ENCODE measurements at regions of chr2 and their contacts with region 1.

Region 1: GRCh38 chr2:37832590-37833197 is 92.4 kb upstream of the RMDN2 start:
- DNase-seq: peak; percentile 88
- ATAC-seq: peak; percentile 89 to 94
- H3K4me3 ChIP-seq: no peak overlapping the region
- H3K27ac ChIP-seq: no peak overlapping the region
- H3K4me1 ChIP-seq: peaks cover 31% of the 10 kb centered on the region
- H3K27me3 ChIP-seq: no peaks in the 10 kb centered on the region
- CTCF ChIP-seq: peak; percentile 82

Region 2: DNA sequence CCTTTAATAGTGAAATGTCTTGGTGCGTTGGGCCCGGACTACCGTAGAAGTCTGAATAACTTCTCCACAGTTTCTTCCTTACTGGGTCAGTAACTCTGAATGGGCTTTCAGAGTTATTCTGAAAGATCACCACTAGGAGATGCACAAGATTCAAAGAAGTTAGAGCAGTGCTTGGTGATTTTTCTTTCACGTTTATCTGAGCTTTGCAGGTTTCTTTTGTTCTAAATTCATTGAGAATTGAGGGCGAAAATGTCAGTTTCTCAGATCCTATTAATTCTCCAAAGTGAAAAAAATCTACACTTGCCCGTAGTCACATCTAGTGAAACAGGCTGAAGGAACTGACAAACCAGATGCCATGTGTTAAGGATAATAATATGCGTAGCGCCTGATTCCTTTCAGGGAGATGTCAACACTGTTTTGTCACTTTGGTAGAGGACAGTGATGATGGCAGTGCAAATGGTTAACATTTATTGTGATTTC is 418.2 kb before region 1 on chr2:
- intact Hi-C with region 1: loop called (anchors 5 kb)
- DNase-seq: no peak
- ATAC-seq: peak; percentile 75 to 89
- H3K4me3 ChIP-seq: no peak overlapping the region
- H3K27ac ChIP-seq: no peak overlapping the region
- H3K4me1 ChIP-seq: peaks cover 11% of the 10 kb centered on the region
- H3K27me3 ChIP-seq: no peaks in the 10 kb centered on the region
- CTCF ChIP-seq: peak; percentile 82